ENCODE measurements at regions of chr1 and their contacts with region 1.

Region 1: DNA sequence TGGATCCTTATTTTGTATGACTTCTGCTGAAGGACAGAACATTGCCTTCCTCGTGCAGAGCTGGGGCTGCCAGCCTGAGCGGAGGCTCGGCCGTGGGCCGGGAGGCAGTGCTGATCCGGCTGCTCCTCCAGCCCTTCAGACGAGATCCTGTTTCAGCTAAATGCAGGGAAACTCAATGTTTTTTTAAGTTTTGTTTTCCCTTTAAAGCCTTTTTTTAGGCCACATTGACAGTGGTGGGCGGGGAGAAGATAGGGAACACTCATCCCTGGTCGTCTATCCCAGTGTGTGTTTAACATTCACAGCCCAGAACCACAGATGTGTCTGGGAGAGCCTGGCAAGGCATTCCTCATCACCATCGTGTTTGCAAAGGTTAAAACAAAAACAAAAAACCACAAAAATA is 27.5 kb upstream of the KDM4A start:
- DNase-seq: no peak
- H3K4me3 ChIP-seq: no peak overlapping the region
- H3K27ac ChIP-seq: no peak overlapping the region
- H3K4me1 ChIP-seq: no peaks in the 10 kb centered on the region
- H3K27me3 ChIP-seq: no peaks in the 10 kb centered on the region
- CTCF ChIP-seq: no peak
- EP300 ChIP-seq: no peak
- POLR2A ChIP-seq: no peak
- RAD21 ChIP-seq: no peak

Region 2: GRCh38 chr1:43556777-43557176 is 65.7 kb before region 1 on chr1:
- CTCF ChIA-PET with region 1: no interaction called
- POLR2A ChIA-PET with region 1: no interaction called
- DNase-seq: no peak
- H3K4me3 ChIP-seq: no peak overlapping the region
- H3K27ac ChIP-seq: no peak overlapping the region
- H3K4me1 ChIP-seq: peaks cover 6 to 31% (median 17%) of the 10 kb centered on the region in 4 experiments
- H3K27me3 ChIP-seq: no peaks in the 10 kb centered on the region
- CTCF ChIP-seq: no peak
- EP300 ChIP-seq: no peak
- POLR2A ChIP-seq: no peak
- RAD21 ChIP-seq: no peak

Region 3: DNA sequence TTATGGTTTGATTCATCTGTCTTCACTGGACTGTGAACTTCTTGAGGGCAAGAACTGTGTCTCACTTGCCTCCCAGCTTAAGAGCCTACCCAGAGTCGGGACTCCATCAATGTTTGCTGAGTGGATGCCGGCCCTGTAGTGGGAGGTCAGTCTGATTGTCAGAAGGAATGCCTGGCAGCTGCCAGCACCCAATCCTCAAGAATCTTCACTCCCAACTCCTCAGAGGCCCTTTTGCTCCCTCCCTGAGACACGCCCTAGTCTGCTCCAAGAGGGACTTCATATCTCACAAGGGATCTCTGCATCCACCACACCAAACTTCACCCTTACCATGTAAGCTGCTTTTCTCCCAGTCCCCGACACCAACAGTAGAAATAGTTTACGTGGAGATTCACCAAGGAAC is 12.2 kb after region 1 on chr1:
- CTCF ChIA-PET with region 1: interaction called, 3 read pairs
- POLR2A ChIA-PET with region 1: interaction called, 32 read pairs
- DNase-seq: no peak
- H3K4me3 ChIP-seq: no peak overlapping the region
- H3K27ac ChIP-seq: no peak overlapping the region
- H3K4me1 ChIP-seq: 0 out of 7 replicates have a peak, but pooled peaks cover 0 to 4% (median 0%) of the 10 kb centered on the region in 4 experiments
- H3K27me3 ChIP-seq: no peaks in the 10 kb centered on the region; a peak in 1 of 7 replicates
- CTCF ChIP-seq: no peak
- EP300 ChIP-seq: no peak
- POLR2A ChIP-seq: no peak
- RAD21 ChIP-seq: no peak

Region 4: GRCh38 chr1:43704838-43705237 is 82.4 kb after region 1 on chr1:
- CTCF ChIA-PET with region 1: no interaction called
- POLR2A ChIA-PET with region 1: no interaction called
- DNase-seq: no peak
- H3K4me3 ChIP-seq: no peak overlapping the region
- H3K27ac ChIP-seq: no peak overlapping the region
- H3K4me1 ChIP-seq: peaks cover 0 to 6% (median 5%) of the 10 kb centered on the region in 4 experiments; a peak in 6 of 7 replicates
- H3K27me3 ChIP-seq: no peaks in the 10 kb centered on the region
- CTCF ChIP-seq: peak in 1 of 3 experiments; percentile 23; a peak in 1 of 4 replicates
- EP300 ChIP-seq: no peak
- POLR2A ChIP-seq: no peak
- RAD21 ChIP-seq: no peak